Activated CD4-positive, alpha-beta memory T cell treated with anti-CD3 and anti-CD28 coated beads for 36 hours (primary cell): ENCODE measurements at regions of chr4 and their contacts with region 1.

Region 1: GRCh38 chr4:105306158-105306781 is 159.6 kb downstream of the TET2 start:
- DNase-seq: peak; percentile 83
- H3K4me3 Mint-ChIP-seq: peak overlapping the region; percentile 30
- H3K27ac Mint-ChIP-seq: peak overlapping the region; percentile 92
- H3K4me1 Mint-ChIP-seq: peaks cover 25% of the 10 kb centered on the region
- H3K27me3 Mint-ChIP-seq: no peaks in the 10 kb centered on the region

Region 2: GRCh38 chr4:104896660-104897645 is 409.3 kb before region 1 on chr4:
- CTCF ChIA-PET with region 1: no interaction called
- POLR2A ChIA-PET with region 1: no interaction called
- intact Hi-C with region 1: loop called (anchors 5 kb)
- DNase-seq: no peak
- H3K4me3 Mint-ChIP-seq: no peak overlapping the region
- H3K27ac Mint-ChIP-seq: no peak overlapping the region
- H3K4me1 Mint-ChIP-seq: peaks cover 7% of the 10 kb centered on the region
- H3K27me3 Mint-ChIP-seq: no peaks in the 10 kb centered on the region

Region 3: DNA sequence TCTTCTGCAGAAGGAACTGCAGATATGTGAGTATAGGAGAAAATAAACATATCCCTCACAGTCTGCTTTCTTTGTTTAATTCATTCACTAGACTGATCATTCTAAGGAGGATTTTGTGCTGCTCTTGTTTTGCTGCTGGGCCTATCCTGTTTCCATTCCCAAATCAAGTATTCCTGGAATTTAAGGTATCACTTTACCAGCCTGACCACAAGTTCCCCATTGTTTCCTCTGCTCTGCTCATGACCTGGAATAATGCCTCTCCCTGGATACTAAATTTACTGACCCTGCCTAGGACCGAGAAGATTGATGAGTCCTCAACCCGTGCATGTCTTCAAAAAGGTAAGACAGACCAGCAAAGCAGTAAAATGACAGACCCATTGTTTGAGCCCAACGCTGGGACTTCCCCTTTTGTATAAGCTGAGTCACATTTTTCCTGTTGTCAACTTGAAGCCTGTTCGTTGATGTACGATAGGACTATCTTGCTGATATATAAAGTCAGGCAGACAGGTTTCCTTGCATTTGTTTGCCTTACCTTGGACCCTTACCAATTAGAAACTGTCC is 245.1 kb before region 1 on chr4:
- CTCF ChIA-PET with region 1: interaction called, 3 read pairs
- POLR2A ChIA-PET with region 1: interaction called, 9 read pairs
- intact Hi-C with region 1: loop called (anchors 1 kb)
- DNase-seq: peak; percentile 67
- H3K4me3 Mint-ChIP-seq: peak overlapping the region; percentile 30
- H3K27ac Mint-ChIP-seq: peak overlapping the region; percentile 82
- H3K4me1 Mint-ChIP-seq: peaks cover 54% of the 10 kb centered on the region
- H3K27me3 Mint-ChIP-seq: peaks cover 2% of the 10 kb centered on the region

Region 4: GRCh38 chr4:105191621-105192210 is 114.6 kb before region 1 on chr4:
- CTCF ChIA-PET with region 1: no interaction called
- POLR2A ChIA-PET with region 1: no interaction called
- intact Hi-C with region 1: loop called (anchors 1 kb)
- DNase-seq: no peak
- H3K4me3 Mint-ChIP-seq: no peak overlapping the region
- H3K27ac Mint-ChIP-seq: peak overlapping the region; percentile 83
- H3K4me1 Mint-ChIP-seq: peaks cover 87% of the 10 kb centered on the region
- H3K27me3 Mint-ChIP-seq: no peaks in the 10 kb centered on the region

Region 5: DNA sequence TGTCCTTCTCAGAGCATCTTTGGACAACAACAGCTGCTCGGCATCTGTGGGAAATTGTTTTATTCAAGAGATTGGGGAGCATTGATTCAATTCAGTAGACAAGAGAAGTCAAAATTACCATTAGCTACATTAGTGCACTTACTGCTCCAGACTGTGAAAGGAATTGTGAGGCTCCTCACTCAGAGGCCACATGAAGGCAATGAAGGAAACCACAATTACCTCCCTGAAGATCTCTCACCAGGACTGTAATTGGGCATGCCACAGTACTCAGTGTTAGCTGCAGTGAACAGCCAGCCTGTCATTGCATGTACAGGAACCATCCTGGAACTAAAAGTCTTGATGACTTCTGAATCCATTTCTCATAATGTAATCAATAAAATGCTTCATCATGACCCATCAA is 22.8 kb after region 1 on chr4:
- CTCF ChIA-PET with region 1: interaction called, 3 read pairs
- POLR2A ChIA-PET with region 1: interaction called, 19 read pairs
- intact Hi-C with region 1: loop called (anchors 1 kb)
- DNase-seq: no peak
- H3K4me3 Mint-ChIP-seq: no peak overlapping the region
- H3K27ac Mint-ChIP-seq: no peak overlapping the region
- H3K4me1 Mint-ChIP-seq: peaks cover 26% of the 10 kb centered on the region
- H3K27me3 Mint-ChIP-seq: no peaks in the 10 kb centered on the region

Region 6: GRCh38 chr4:105708530-105709391 is 402.5 kb after region 1 on chr4 and contains the starts of genes GSTCD and INTS12:
- CTCF ChIA-PET with region 1: no interaction called
- POLR2A ChIA-PET with region 1: no interaction called
- intact Hi-C with region 1: loop called (anchors 5 kb)
- DNase-seq: peak; percentile 93
- H3K4me3 Mint-ChIP-seq: peak within 1 kb of the TSS; percentile 98
- H3K27ac Mint-ChIP-seq: peak within 1 kb of the TSS; percentile 86
- H3K4me1 Mint-ChIP-seq: peaks cover 27% of the 10 kb centered on the region
- H3K27me3 Mint-ChIP-seq: no peaks in the 10 kb centered on the region
- total RNA-seq, gene GSTCD: 15.2 to 16.7 TPM
- total RNA-seq, gene INTS12: 19.6 to 22.7 TPM